ENCODE measurements at regions of chr14 and their contacts with region 1.

Region 1: GRCh38 chr14:34650421-34651216 is 20.7 kb upstream of the SNX6 start:
- DNase-seq: no peak
- H3K4me3 ChIP-seq: no peak overlapping the region
- H3K27ac ChIP-seq: peak overlapping the region in 1 of 2 donors; percentile 7
- H3K4me1 ChIP-seq: no peaks in the 10 kb centered on the region
- H3K27me3 ChIP-seq: no peaks in the 10 kb centered on the region
- CTCF ChIP-seq: no peak
- POLR2A ChIP-seq: no peak

Region 2: GRCh38 chr14:34629657-34630529 is 20.7 kb before region 1 on chr14 and contains the start of gene SNX6:
- intact Hi-C with region 1: no loop called
- DNase-seq: peak; percentile 70 to 82
- H3K4me3 ChIP-seq: peak within 1 kb of the TSS; percentile 94 to 99 (median 94)
- H3K27ac ChIP-seq: peak within 1 kb of the TSS; percentile 96 to 97
- H3K4me1 ChIP-seq: no peaks in the 10 kb centered on the region
- H3K27me3 ChIP-seq: no peaks in the 10 kb centered on the region
- CTCF ChIP-seq: no peak
- POLR2A ChIP-seq: peak; percentile 7
- total RNA-seq, gene SNX6: 64.2 to 129 (median 127) TPM

Region 3: DNA sequence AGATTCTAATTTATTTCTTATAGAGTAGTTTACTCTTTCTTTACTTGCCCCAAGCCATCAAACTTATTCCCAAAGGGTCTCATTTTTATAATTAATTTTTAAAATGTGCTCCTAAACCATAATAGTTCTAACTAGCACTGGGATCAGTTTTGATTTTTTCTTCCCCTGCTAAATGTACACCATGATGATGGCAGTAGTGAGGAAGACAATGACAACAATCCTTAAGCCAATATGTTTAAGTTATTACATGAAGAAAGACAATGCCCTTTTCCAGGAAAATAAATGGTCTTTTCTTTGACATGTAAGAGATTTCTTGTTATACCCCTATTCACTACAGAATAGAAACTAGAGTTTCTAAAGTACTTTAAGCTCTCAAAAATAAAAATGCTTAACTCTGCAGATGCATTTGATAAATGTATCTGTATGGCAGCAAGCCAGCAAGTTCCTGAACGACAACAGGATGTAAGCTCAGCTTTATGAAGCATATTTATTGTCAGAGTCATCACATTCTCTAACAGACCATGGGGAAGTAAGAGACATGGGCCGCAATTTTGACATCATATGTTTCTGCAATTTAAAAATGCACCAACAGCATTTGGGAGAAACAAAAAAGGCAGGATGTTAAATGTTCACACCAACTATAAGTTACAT is 15.3 kb after region 1 on chr14:
- intact Hi-C with region 1: loop called (anchors 1 kb)
- DNase-seq: no peak
- H3K4me3 ChIP-seq: no peak overlapping the region
- H3K27ac ChIP-seq: no peak overlapping the region
- H3K4me1 ChIP-seq: no peaks in the 10 kb centered on the region
- H3K27me3 ChIP-seq: no peaks in the 10 kb centered on the region
- CTCF ChIP-seq: no peak
- POLR2A ChIP-seq: no peak

Measured in breast epithelium (tissue), 4 donors.